Breast epithelium (tissue), 4 donors: ENCODE measurements at regions of chr11 and their contacts with region 1.

Region 1: GRCh38 chr11:106442032-106442431 is 364.6 kb downstream of the AASDHPPT start:
- DNase-seq: no peak
- H3K4me3 ChIP-seq: no peak overlapping the region
- H3K27ac ChIP-seq: no peak overlapping the region
- H3K4me1 ChIP-seq: no peaks in the 10 kb centered on the region
- H3K27me3 ChIP-seq: no peaks in the 10 kb centered on the region
- CTCF ChIP-seq: no peak
- POLR2A ChIP-seq: no peak

Region 2: GRCh38 chr11:106409671-106410070 is 32.4 kb before region 1 on chr11:
- intact Hi-C with region 1: loop called (anchors 2 kb)
- DNase-seq: no peak
- H3K4me3 ChIP-seq: no peak overlapping the region
- H3K27ac ChIP-seq: no peak overlapping the region
- H3K4me1 ChIP-seq: no peaks in the 10 kb centered on the region
- H3K27me3 ChIP-seq: no peaks in the 10 kb centered on the region
- CTCF ChIP-seq: no peak
- POLR2A ChIP-seq: no peak

Region 3: GRCh38 chr11:107482234-107482633 is 1040.2 kb after region 1 on chr11:
- intact Hi-C with region 1: no loop called
- DNase-seq: no peak
- H3K4me3 ChIP-seq: no peak overlapping the region
- H3K27ac ChIP-seq: no peak overlapping the region
- H3K4me1 ChIP-seq: no peaks in the 10 kb centered on the region
- H3K27me3 ChIP-seq: peaks cover 0 to 3% of the 10 kb centered on the region in 2 donors
- CTCF ChIP-seq: no peak
- POLR2A ChIP-seq: no peak